Spleen (tissue), 13 donors: ENCODE measurements at regions of chr2 and their contacts with region 1.

Region 1: DNA sequence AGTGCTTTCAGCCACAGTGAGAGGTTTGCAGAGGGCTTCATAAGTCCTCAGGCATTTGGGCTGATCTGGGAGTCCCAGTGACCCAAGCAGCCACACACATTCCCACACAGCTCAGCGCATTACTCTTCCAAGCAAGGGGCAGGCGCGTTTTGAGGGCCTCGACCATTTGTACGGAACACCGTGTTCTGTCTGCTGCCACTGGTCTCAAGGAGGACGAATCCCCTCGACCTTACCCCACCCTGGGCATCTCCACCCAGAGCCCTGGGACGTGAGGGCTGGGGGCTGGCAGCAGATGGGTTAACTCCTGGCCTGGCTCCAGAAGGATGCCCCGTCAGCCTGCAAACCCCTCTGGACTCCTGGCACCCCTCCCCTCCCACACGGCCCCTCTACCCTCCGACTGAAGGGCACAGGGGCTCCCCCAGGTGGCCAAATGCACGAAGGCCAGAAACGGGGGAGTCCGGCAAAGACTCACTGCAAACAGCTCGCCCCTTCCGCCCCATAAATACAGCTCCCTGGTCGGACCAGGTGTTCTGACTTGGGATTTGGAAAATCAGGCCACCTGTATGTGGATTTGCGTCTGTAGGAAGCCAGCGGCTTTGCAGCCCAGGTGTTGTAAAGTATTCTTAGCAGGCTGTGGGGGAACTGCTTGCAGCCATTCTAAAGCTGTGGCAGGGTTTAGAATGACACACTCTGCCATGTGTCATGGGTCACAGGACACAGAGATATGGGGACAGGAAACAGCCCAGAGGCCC is 33.6 kb upstream of the PTMA start:
- DNase-seq: peak; percentile 92
- H3K4me3 ChIP-seq: peak overlapping the region in 1 of 8 donors; percentile 39
- H3K27ac ChIP-seq: peak overlapping the region; percentile 36 to 93 (median 88)
- H3K4me1 ChIP-seq: peaks cover 33 to 80% (median 73%) of the 10 kb centered on the region in 6 donors
- H3K27me3 ChIP-seq: no peaks in the 10 kb centered on the region
- CTCF ChIP-seq: peak; percentile 61 to 91 (median 86)
- POLR2A ChIP-seq: no peak

Region 2: DNA sequence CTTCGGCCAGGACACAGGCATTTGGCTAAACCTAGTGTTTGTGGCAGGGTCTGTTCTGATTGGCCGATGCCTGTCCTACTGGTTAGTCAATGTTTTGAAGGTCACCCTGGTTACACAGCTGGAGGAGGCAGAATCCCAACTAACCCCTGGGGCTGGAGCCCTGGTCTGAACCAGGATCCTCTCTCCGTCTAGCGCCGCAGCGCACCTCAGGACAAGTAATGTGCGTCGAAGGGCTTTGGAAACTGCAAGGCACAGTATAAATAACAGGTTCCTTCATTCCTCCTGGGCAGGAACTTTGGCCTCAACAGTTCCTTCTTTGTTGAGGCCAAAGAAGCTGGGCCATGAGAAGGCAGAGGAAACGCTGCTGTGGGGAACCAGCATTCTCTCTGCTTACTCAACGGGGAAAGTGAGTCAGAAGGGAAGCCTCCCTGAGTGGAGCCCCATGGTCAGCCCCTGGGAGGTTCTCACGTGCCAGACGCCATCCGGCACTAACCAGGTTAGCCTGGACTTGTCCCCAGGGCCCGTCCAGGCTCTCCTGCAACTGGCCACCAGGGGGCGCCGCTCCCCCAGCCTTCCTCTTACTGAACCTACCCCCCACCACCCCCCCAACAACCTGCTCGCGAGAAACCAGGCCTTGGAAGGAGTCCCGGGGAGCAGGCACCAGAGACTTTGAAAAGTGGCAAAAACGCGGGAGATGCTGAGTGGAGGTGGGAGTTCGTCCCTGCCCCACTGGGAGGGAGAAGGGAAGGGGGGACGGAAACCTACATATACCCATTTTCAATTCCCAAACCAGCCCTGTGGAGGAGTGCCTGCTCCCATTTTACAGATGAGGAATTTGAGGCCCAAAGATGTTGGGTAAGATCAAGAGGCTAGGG is 62.3 kb before region 1 on chr2:
- intact Hi-C with region 1: loop called (anchors 5 kb)
- DNase-seq: peak; percentile 97
- H3K4me3 ChIP-seq: peak overlapping the region in 2 of 8 donors; percentile 56 to 80
- H3K27ac ChIP-seq: peak overlapping the region; percentile 86 to 97 (median 93)
- H3K4me1 ChIP-seq: peaks cover 25 to 63% (median 44%) of the 10 kb centered on the region in 6 donors
- H3K27me3 ChIP-seq: peaks cover 0 to 23% (median 0%) of the 10 kb centered on the region in 7 donors
- CTCF ChIP-seq: peak; percentile 88 to 99 (median 98)
- POLR2A ChIP-seq: no peak